GM13976 (cell line): ENCODE measurements at regions of chr20 and their contacts with region 1.

Region 1: DNA sequence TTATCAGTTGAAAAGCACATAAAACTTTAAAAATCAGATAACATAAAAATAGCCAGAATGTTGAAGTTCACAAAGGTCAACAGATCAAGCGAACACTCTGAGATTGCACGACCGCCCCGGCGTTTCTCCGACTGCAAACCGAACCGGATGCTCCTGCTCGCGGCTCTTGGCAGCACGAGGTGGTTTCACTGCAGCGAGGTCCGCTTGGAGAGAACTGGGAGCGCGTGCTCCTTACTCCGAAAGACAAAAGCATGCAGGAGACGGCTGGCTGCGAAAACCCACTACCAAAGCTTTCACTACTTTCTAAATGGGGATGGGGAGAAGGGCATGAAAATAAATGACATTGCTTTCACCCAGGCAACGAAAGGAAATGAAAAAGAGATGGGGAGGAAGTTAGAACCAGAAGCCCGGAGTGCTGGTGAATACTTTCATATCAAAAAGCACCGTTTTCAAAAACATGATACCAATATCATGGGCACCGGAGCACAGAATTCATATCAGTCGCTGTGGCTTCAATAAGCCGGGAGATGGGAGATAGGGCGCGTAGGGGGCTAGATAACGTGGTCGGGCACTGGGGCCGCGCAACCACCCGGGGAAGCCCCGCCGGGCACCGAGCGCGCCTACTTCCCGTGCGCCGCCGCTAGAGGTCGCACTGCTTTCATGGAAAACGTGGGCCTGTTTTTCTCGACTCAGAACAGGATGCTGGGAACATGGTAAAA is 8.3 kb upstream of the ANKRD60 start:
- DNase-seq: peak; percentile 87
- CTCF ChIP-seq: peak; percentile 97

Region 2: DNA sequence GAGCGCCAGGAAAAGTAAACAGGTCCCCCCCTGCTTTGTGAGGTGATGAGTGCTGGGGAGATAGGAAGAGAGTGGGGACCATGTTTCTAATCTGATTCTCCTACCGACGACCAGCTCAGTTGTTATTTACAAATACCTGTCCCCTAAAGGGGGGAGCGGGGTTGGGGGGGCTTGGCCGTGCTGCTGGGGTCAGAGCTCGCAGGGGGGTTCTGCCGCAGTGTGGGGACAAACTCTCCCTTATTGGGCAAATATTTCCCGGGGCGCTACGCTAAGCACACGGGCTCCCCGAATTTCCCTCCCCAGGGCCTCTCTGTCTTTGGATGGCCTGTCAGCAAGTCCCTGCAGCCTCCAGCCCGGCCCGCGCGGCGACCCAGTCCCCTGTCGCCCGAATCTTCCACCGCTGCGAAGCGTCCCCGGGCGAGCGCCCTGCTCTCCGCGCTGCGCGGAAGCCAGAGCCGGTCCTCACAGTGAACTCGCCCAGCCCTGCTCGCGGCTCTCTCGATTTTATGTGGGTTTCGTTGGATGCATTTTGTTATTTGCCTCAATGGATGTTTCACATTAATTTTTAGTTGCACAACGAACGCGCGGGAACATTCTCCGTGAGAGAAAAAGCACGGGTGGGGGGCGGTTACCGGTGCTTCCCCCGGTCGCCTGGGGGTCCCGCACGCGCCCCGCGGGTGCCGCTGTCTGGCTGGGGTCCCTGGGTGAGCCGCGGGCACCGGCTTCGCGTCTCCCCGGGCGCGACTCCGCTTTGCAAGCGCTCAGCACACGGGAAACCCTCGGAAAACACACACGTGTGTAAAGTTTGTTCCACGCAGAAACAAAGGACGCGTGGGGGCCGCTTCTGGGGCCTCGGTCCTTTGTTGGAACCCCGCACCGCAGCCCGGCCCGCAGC is 412.8 kb after region 1 on chr20:
- in situ Hi-C with region 1: loop called (anchors 25 kb)
- DNase-seq: peak; percentile 56
- CTCF ChIP-seq: no peak

Region 3: GRCh38 chr20:58839474-58839874 is 602.7 kb after region 1 on chr20:
- in situ Hi-C with region 1: loop called (anchors 25 kb)
- DNase-seq: no peak
- CTCF ChIP-seq: peak; percentile 27